Transverse colon (tissue), 4 donors: ENCODE measurements at regions of chr15 and their contacts with region 1.

Region 1: DNA sequence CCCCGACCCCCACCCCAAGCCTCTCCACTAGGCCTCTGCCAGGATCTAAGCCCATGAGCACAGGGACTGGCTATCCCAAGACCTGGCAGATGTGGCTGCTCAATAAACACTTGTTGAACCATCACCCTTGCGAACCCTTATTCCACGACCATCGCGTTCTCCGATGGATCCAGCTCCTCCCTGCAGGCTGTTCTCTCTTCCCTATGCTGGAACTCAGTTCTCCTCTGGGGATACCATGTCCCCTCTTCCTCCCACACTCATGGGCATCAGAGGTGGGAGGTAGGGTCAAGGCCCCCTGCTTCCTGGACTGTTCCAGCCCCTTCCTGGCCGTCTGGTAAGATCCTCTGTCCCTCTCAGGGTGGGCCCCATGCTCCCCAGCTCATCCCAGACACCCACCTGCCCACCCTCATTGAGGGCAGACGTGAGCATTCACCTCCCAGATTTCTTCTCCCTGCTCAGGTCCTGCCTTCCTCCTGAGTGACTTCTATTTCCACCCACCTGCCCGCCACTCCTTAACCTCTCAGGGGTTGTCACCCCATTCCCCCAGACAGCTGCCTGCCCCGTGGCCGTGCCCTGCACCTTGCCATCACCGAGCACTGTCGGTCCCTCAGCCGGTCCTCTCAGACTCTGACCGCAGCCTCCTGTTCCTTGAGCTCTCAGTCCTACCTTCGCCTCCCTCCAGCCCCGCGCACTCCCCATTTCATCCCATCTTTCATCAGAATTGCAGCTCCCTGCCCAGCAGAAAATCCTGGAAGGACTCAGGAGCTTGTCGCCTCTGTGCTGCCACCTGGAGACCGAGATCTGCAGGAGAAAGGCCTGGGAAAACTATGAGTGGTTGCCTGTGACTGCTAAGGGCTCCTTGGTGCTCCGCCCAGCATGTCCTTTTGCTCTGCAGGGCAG is 42.0 kb downstream of the PML start:
- DNase-seq: peak; percentile 64
- H3K4me3 ChIP-seq: no peak overlapping the region
- H3K27ac ChIP-seq: peak overlapping the region in 1 of 4 donors; percentile 34
- H3K4me1 ChIP-seq: peaks cover 2 to 21% (median 8%) of the 10 kb centered on the region in 4 donors
- H3K27me3 ChIP-seq: no peaks in the 10 kb centered on the region
- CTCF ChIP-seq: peak; percentile 48 to 57 (median 52)
- EP300 ChIP-seq: no peak
- POLR2A ChIP-seq: no peak

Region 2: DNA sequence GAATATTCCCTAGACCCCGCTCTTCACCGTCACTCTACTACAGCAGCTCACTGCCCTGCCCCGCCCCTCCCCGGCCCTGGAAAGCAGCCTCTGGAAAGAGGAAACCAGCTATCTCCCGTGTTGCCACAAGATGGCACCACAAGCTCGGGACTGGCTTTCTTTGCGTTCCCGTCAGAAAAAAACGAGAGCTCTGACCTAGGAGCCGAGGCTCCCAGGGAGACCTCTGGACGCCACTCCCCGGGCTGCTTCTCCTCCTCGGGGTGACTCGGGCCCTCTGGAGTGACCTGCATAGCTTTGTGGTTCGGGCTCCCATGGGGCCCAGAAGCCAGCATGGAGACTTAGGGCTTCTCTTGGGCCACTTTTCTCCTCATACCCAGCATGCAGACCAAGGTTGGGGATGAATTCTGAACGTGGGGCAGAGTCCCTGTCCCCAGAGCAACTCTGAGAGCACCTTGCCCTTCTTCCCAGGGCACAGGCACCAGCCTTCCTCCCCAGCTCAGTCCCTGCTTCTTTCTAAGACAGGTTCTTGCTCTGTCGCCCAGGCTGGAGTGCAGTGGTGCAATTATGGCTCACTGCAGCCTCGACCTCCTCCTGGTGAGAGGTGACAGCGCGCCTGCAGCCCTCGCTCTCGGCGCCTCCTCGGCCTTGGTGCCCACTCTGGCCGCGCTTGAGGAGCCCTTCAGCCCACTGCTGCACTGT is 63.4 kb before region 1 on chr15:
- in situ Hi-C with region 1: no loop called
- intact Hi-C with region 1: loop called (anchors 2 kb)
- DNase-seq: peak; percentile 90
- H3K4me3 ChIP-seq: peak overlapping the region in 1 of 4 donors; percentile 21
- H3K27ac ChIP-seq: no peak overlapping the region
- H3K4me1 ChIP-seq: peaks cover 0 to 16% (median 4%) of the 10 kb centered on the region in 4 donors
- H3K27me3 ChIP-seq: peaks cover 32% of the 10 kb centered on the region
- CTCF ChIP-seq: peak; percentile 80 to 88 (median 85)
- EP300 ChIP-seq: no peak
- POLR2A ChIP-seq: no peak

Region 3: DNA sequence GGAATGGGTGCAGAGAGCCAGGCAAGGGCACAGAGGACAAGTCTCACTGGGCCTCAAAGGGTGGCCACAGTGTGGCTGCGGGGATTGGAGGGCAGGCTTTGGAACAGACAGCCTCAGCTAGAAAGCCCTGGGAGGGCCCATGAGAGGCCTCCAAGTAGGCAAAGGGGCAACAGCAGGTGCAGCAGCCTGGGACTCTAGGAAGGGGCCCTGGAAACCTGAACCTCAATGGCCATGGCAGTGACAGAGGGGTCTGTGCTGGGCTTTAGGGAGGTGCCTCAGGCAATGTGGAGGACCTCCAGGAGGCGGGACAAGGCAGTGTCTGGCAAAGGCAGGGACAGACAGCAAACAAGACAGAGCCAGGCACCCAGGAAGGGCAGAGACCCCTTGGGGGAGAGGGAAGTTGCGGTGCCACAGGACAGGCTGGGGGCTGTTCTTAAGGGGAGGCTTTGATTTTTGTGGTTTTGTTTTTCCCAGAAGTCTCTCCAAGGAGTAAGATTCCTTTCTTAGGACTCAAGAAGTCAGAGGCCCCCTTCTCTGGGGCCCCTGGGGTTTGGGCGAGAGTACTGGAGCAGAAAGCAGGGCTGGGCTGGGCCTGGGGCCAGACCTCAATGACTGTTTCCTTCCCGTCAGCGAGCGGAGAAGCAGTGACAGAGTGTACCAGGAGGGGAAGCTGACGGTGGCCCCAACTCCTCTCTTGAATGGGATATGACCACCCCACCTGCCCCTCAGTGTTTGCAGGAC is 54.1 kb before region 1 on chr15:
- in situ Hi-C with region 1: loop called in 1 of 4 experiments (anchors 10 kb)
- intact Hi-C with region 1: no loop called
- DNase-seq: peak; percentile 75
- H3K4me3 ChIP-seq: no peak overlapping the region
- H3K27ac ChIP-seq: peak overlapping the region; percentile 82 to 90 (median 86)
- H3K4me1 ChIP-seq: peaks cover 26 to 43% (median 37%) of the 10 kb centered on the region in 4 donors
- H3K27me3 ChIP-seq: no peaks in the 10 kb centered on the region
- CTCF ChIP-seq: no peak
- EP300 ChIP-seq: peak; percentile 65
- POLR2A ChIP-seq: no peak